Activated T-helper 1 cell treated with anti-CD3 and anti-CD28 coated beads, Interleukin-12 subunit alpha, Interleukin-12 subunit beta, Interleukin-2, Interleukin-4 antibody, amounts not matched to agents 30 ng/mL and 10 ng/mL and 1 ng/mL, durations not matched to agents 14 hours and 24 hours and 36 hours (primary cell): ENCODE measurements at regions of chr19 and their contacts with region 1.

Region 1: DNA sequence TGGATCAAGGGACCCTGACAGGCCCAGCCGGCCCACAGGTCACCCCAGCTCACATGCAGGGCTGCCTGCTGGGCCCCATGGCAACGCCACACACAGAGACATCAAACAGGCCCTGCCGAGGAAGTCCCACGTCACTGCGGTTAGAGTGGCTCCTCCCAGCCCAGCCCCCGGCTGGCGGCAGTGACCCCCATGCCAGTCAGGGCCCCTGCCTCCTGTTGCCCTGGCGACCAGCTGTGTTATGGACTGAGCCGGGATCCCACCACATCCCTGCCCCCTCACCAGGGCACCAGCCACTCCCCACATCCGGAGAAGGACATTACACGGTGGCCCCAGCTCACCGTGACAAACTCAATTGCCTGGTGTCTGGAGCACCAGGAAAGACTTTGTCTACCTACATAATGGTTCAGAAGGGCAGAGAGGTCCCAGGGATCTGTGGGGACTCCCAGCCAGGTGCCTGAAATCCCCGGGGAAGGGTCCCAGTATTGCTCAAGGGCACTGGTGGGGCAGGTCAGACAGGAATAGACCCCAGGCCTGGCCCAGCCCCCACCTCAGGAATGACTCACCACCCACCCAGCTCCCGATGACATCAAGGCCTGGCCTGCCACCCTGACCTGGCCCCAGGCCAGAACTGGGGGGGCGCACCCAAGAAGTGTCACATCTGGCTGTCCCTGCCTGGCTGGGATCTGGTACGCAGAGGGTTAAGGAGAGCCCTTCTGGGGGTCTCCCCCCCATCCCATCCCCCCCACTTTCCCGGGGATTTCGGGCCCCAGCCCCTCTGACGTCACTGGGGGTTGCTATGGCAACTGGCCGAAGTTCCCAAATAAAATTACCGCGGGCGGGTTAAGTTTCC is 30.2 kb upstream of the NANOS3 start:
- DNase-seq: peak; percentile 96
- H3K4me3 Mint-ChIP-seq: peak overlapping the region; percentile 86
- H3K27ac Mint-ChIP-seq: peak overlapping the region; percentile 97
- H3K4me1 Mint-ChIP-seq: peaks cover 45% of the 10 kb centered on the region
- H3K27me3 Mint-ChIP-seq: no peaks in the 10 kb centered on the region

Region 2: DNA sequence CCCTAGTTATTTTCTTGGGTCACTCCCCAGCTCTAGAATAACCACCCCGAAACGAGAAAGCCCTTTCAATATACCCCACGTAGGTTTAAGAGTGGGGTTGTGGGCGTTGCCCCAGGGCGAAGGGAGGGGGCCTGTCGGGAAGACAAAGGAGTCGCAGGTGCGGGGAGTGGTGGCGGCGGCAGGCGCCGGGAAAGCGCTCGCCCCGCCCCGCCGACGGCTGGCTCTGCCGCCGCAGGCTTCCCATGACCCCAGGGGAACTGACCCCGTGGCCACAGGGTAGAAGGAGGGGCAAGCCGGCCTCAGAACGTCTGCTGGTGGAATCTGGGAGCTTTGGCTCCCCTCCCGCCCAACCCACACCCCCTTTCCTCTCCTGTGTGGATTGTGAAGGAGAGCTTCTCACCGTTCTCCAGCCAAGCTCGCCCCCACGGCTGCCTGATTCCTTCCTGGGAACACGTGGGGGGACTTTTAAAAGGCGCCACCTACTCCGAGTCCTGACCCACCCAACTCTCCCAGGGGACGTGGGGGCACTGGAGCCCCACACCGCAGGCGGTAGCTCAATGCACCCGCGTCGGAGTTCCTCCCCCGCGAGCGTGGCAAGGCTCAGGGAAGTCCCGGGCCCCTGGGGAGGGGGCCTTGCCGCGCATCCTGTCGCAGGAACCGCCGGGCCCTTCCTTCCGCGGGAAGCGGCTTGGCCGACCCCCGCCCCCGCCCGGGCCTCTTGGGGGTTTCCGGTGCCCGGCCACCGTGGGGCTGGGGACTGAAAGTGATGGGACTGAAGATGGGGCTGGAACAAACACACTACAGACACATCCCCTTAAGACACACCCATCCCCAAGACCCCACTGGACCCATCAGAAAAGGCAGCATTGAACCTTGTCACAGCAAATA is 691.1 kb before region 1 on chr19:
- intact Hi-C with region 1: loop called (anchors 5 kb)
- DNase-seq: peak; percentile 84
- H3K4me3 Mint-ChIP-seq: peak overlapping the region; percentile 95
- H3K27ac Mint-ChIP-seq: peak overlapping the region; percentile 100
- H3K4me1 Mint-ChIP-seq: peaks cover 40% of the 10 kb centered on the region
- H3K27me3 Mint-ChIP-seq: peaks cover 2% of the 10 kb centered on the region

Region 3: GRCh38 chr19:13833330-13834243 is 13.2 kb before region 1 on chr19:
- intact Hi-C with region 1: loop called (anchors 2 kb)
- DNase-seq: peak; percentile 91
- H3K4me3 Mint-ChIP-seq: peak overlapping the region; percentile 76
- H3K27ac Mint-ChIP-seq: peak overlapping the region; percentile 86
- H3K4me1 Mint-ChIP-seq: peaks cover 32% of the 10 kb centered on the region
- H3K27me3 Mint-ChIP-seq: no peaks in the 10 kb centered on the region

Region 4: GRCh38 chr19:13917888-13918406 is 71.2 kb after region 1 on chr19:
- intact Hi-C with region 1: no loop called
- DNase-seq: no peak
- H3K4me3 Mint-ChIP-seq: no peak overlapping the region
- H3K27ac Mint-ChIP-seq: no peak overlapping the region
- H3K4me1 Mint-ChIP-seq: no peaks in the 10 kb centered on the region
- H3K27me3 Mint-ChIP-seq: no peaks in the 10 kb centered on the region